Endothelial cell of umbilical vein (primary cell): ENCODE measurements at regions of chr15 and their contacts with region 1.

Region 1: GRCh38 chr15:40301467-40302179 is 6.1 kb downstream of the PLCB2 start:
- DNase-seq: no peak
- H3K4me3 ChIP-seq: no peak overlapping the region
- H3K27ac ChIP-seq: no peak overlapping the region
- H3K4me1 ChIP-seq: no peaks in the 10 kb centered on the region
- H3K27me3 ChIP-seq: peaks cover 5 to 11% of the 10 kb centered on the region in 2 experiments
- CTCF ChIP-seq: no peak
- POLR2A ChIP-seq: no peak

Region 2: DNA sequence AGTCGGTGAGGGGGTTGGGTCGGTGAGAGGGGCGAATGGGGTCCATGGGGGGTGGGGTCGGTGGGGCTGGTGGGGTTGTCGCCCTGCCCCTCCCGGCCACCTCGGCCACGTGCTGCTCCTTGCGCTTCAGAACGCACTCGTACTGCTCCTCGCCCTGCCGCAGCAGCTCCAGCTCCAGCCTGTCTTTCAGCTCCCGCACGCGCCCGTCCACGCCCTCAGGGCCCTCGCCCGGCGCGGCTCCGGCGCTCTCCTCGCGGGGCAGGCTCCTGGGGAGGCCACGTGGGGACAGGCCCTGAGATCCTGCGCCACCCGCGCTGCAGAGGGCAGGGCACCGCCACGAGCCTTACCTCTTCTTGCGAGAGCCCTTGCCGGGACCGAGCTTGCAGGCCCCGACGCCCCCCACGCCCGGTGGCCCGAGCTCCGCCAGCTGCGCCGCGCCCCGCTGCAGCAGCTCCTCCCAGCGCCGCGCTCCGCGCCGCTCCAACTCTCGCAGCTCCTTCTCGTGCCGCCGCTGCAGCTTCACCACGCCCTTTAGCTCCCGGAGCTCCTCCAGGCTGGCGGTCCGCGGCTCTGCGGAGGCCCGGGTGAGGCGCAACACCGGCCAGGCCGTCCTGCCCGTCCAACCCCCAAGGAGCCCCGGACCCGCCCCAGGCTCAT is 10.6 kb before region 1 on chr15:
- CTCF ChIA-PET with region 1: interaction called, 83 read pairs
- POLR2A ChIA-PET with region 1: no interaction called
- dilution Hi-C with region 1: no loop called
- intact Hi-C with region 1: no loop called
- DNase-seq: peak; percentile 36
- H3K4me3 ChIP-seq: peak overlapping the region in 1 of 3 experiments; percentile 23
- H3K27ac ChIP-seq: no peak overlapping the region
- H3K4me1 ChIP-seq: no peaks in the 10 kb centered on the region
- H3K27me3 ChIP-seq: peaks cover 0 to 27% of the 10 kb centered on the region in 2 experiments
- CTCF ChIP-seq: no peak
- POLR2A ChIP-seq: no peak

Region 3: DNA sequence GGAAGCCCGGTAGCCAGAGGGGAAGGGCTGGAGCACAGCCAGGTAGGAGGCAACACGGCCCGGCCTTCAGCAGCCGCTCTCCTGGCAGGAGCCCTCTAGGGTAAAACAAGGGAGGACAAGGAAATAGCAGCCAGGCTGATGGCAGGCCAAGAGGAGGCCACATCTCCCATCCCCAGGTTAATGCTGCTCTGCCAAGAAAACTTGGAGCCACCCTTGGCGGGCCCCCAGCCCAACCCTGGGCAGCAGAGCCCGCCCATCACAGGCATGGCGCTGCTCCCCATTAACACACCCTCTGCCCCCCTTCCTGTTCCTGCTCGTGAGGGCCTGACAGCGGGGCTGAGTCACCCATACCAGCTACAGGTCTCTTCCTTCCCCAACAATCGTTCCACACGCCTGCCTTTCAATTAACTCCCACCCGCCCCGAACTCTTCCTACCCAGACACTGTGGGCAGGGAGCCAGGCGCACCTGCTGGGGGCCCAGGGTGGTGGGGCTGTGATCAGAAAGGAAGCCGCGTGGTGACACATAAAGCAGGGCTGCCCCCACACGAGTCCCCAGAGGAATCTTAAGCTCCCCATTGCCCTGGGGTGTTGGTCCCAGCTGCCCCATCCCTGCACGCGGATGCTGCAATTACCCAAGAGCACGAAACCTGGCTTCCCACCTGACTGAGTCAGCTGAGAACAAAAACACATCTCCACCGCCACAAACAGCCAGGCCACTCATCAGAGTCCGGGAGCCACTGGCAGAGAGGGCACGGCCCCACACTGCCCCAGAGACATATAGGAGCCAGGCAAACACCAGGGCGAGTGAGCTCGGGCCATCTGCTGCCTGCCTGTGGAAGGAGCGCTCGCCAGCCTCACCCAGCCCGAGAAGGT is 467.9 kb after region 1 on chr15 and contains the start of gene C15orf62:
- CTCF ChIA-PET with region 1: no interaction called
- POLR2A ChIA-PET with region 1: no interaction called
- dilution Hi-C with region 1: no loop called
- intact Hi-C with region 1: no loop called
- DNase-seq: peak; percentile 65
- H3K4me3 ChIP-seq: no peak within 1 kb of the TSS
- H3K27ac ChIP-seq: peak within 1 kb of the TSS; percentile 46
- H3K4me1 ChIP-seq: peaks cover 29% of the 10 kb centered on the region
- H3K27me3 ChIP-seq: no peaks in the 10 kb centered on the region
- CTCF ChIP-seq: no peak
- POLR2A ChIP-seq: no peak
- total RNA-seq, gene C15orf62: 0.38 and 0.44 TPM in 2 replicates